Posterior vena cava (tissue), 2 donors: ENCODE measurements at regions of chr17 and their contacts with region 1.

Region 1: DNA sequence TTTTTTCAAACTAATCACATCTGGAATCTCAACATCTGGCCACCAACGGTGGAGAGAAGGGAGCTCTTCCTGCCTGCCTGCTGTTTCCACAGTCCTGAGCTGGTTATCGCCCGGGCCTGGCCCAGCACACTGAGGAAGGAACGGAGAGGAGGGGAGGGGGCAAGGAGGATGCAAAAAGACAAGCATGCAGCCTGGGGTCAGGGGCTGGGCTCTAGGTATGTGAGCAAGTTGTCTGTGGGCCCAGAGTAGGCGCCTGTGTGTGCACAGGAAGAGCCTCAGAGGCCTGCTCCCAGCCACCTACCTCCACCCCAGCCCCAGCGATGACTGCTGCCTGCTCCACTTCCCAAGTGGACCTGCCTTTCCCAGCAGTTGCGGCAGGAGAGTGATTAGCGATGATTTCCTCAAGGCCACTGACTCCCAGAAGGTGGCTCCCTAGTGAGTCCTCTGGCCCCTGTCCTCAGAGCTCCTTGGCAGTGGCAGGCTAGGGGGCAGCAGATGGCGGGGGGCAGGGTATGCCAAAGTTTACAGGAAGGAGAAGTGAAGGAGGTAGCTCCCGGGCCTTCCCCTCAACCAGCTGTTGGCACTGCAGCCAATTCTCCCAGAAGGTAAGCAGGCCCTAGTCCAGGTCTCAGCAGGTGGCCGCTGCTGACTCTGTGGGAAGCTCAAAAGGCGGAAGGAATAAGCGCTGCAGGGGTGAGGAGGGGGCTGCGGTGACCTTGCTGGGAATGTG is 27.0 kb upstream of the RASD1 start:
- DNase-seq: no peak

Region 2: GRCh38 chr17:16623282-16623681 is 899.9 kb before region 1 on chr17:
- intact Hi-C with region 1: loop called in 1 of 2 experiments (anchors 5 kb)
- DNase-seq: no peak

Region 3: DNA sequence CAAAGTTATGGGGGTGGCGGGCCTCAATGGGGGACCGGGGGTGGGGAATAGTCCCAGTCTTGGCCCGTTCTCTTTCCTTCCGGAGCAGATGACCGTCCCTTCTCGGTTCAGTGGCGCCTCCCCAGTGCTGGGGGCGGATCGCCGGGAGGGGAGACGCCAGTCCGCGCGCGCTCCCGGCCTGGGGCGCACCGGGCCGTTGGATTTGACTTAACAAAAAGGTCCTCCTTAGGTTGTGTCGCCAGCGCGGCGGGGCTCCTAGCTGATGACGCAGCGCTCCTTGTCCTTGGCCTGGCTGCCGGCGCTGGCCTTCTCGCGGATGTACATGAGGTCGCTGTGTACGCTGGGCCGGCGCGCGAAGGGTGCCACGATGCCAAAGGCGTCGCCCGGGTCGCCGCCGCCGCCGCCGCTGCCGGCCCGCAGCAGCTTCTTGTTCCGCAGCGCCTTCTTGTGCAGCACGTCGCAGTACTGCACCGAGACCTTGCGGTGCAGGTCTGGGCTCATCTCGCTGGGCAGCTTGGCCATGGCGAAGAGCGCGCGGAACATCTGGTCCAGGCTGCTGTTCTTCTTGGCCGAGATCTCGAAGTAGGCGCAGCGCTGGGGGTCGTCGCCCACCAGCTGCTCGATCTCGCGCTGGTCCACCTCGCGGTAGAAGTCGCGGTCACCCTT is 28.2 kb before region 1 on chr17:
- intact Hi-C with region 1: no loop called
- DNase-seq: peak; percentile 91

Region 4: GRCh38 chr17:17653343-17653742 is 130.2 kb after region 1 on chr17:
- intact Hi-C with region 1: no loop called
- DNase-seq: no peak